Activated CD4-positive, alpha-beta T cell treated with anti-CD3 and anti-CD28 coated beads for 36 hours (primary cell): ENCODE measurements at regions of chr12 and their contacts with region 1.

Region 1: DNA sequence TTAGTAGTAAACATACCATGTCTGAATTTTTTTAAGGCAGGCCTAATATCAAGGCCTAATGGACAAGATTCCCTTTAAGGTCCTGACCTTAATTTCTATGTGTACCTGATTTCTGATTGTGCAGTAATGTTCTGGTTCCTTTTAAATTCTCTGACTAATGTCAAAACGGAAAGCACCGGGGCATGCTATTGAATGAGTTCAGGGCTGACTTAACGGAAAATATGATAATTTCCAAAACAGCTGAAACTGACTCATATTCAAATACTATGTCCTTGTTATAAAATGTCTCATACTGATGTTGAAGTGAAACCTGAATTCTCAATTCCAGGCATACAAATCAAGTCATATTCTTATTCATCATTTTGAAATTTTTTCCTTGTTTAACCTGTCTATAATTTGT is 6.7 kb downstream of the TAS2R43 start:
- DNase-seq: peak; percentile 57
- ATAC-seq: peak; percentile 90
- H3K4me3 Mint-ChIP-seq: no peak overlapping the region
- H3K27ac Mint-ChIP-seq: peak overlapping the region; percentile 31
- H3K4me1 Mint-ChIP-seq: peaks cover 13% of the 10 kb centered on the region
- H3K27me3 Mint-ChIP-seq: no peaks in the 10 kb centered on the region

Region 2: GRCh38 chr12:10982244-10982643 is 103.2 kb before region 1 on chr12:
- CTCF ChIA-PET with region 1: no interaction called
- POLR2A ChIA-PET with region 1: no interaction called
- intact Hi-C with region 1: loop called in 1 of 2 experiments (anchors 2 kb)
- DNase-seq: peak; percentile 54
- ATAC-seq: peak; percentile 89
- H3K4me3 Mint-ChIP-seq: no peak overlapping the region
- H3K27ac Mint-ChIP-seq: no peak overlapping the region
- H3K4me1 Mint-ChIP-seq: peaks cover 42% of the 10 kb centered on the region
- H3K27me3 Mint-ChIP-seq: peaks cover 17% of the 10 kb centered on the region